Heart right ventricle (tissue), 16 donors: ENCODE measurements at regions of chr19 and their contacts with region 1.

Region 1: GRCh38 chr19:17859533-17860330 is at the start of gene RPL18A:
- DNase-seq: peak; percentile 98 to 99
- ATAC-seq: peak; percentile 96 to 99 (median 98)
- H3K4me3 ChIP-seq: peak within 1 kb of the TSS; percentile 75 to 99 (median 92)
- H3K27ac ChIP-seq: peak within 1 kb of the TSS; percentile 76 to 96 (median 90)
- H3K4me1 ChIP-seq: peaks cover 9 to 33% (median 23%) of the 10 kb centered on the region in 9 donors
- H3K27me3 ChIP-seq: no peaks in the 10 kb centered on the region
- CTCF ChIP-seq: peak; percentile 42 to 91 (median 77)
- total RNA-seq, gene RPL18A: 623 to 1,142 (median 682) TPM

Region 2: DNA sequence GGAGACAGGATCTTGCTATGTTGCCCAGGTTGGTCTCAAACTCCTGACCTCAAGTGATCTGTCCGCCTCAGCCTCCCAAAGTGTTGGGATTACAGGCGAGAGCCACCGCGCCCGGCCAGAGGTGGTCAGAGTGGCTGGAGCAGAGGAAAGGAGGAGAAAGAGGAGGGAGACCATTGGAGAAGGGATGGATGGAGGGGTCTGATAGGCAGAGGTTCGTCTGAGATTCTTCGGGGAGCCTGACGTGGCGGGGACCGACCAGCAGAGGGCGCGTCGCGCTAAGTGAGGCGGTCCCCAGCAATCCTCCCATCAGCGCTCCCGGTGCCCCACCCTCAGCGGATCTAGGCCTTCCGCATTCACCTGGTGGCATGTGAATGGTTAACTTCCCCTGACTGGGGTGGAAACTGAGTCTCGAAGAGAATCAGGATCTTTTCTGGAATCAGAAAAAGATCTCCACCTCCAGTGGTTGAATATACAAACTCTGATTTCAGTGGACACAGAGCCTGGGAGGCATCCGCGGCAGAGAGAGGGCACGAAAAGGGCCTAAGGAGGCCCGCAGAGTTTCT is 513.5 kb before region 1 on chr19:
- intact Hi-C with region 1: loop called in 1 of 10 experiments (anchors 10 kb)
- DNase-seq: peak; percentile 78 to 81
- ATAC-seq: peak; percentile 70 to 85 (median 78)
- H3K4me3 ChIP-seq: no peak overlapping the region
- H3K27ac ChIP-seq: peak overlapping the region in 8 of 10 donors; percentile 56 to 86 (median 77)
- H3K4me1 ChIP-seq: peaks cover 16 to 52% (median 36%) of the 10 kb centered on the region in 9 donors
- H3K27me3 ChIP-seq: peaks cover 0 to 19% (median 0%) of the 10 kb centered on the region in 7 donors
- CTCF ChIP-seq: peak; percentile 92 to 98 (median 97)

Region 3: GRCh38 chr19:17511724-17512573 is 347.8 kb before region 1 on chr19:
- intact Hi-C with region 1: loop called in 1 of 10 experiments (anchors 5 kb)
- DNase-seq: peak; percentile 90 to 93
- ATAC-seq: peak; percentile 84 to 89 (median 85)
- H3K4me3 ChIP-seq: peak overlapping the region; percentile 69 to 98 (median 92)
- H3K27ac ChIP-seq: peak overlapping the region; percentile 96 to 100 (median 100)
- H3K4me1 ChIP-seq: peaks cover 4 to 46% (median 26%) of the 10 kb centered on the region in 9 donors
- H3K27me3 ChIP-seq: no peaks in the 10 kb centered on the region
- CTCF ChIP-seq: peak in 6 of 9 donors; percentile 26 to 53 (median 42)

Region 4: DNA sequence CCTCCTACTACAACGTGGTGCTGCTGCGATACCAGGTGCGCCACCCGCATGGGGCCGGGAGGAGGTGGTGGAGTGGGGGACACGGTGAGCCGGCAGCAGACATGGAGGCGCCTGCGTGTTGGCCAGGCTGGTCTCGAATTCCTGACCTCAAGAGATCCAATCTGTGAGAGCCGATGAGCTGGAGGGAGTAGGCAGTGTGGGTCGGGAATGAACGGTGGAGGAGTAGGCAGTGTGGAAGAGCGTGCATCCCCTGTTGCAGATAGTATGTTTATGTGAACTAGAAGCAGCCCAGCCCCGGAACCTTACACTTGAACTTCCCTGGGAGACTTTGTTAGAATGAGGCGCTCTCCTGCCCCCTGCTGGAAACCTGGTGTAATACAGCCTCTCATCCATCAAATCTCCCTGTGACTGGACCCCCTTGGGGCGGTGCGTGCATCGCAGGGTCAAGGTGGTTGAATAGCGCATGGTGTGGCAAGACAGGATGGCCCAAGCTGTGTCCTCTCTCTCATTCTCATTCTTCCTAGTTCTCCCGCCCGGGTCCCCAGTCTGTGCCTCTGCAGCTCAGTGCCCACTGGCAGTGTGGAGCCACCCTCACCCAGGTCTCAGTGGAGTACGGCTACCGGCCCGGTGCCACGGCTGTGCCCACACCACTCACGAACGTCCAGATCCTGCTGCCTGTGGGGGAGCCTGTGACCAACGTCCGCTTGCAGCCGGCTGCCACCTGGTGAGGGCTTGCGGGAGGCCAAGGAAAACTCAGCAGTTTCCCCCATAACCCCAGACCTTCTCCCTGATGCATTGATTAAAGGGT is 75.3 kb before region 1 on chr19:
- intact Hi-C with region 1: loop called in 2 of 10 experiments (anchors 10 kb)
- DNase-seq: peak; percentile 41 to 56
- ATAC-seq: peak in 6 of 8 donors; percentile 38 to 60 (median 48)
- H3K4me3 ChIP-seq: no peak overlapping the region
- H3K27ac ChIP-seq: no peak overlapping the region
- H3K4me1 ChIP-seq: peaks cover 0 to 3% (median 0%) of the 10 kb centered on the region in 9 donors
- H3K27me3 ChIP-seq: peaks cover 0 to 30% (median 25%) of the 10 kb centered on the region in 7 donors
- CTCF ChIP-seq: peak; percentile 63 to 84 (median 78)

Region 5: GRCh38 chr19:17996826-17997316 is 137.1 kb after region 1 on chr19:
- intact Hi-C with region 1: loop called in 7 of 10 experiments (anchors 2 to 10 kb)
- DNase-seq: peak; percentile 83 to 88
- ATAC-seq: peak; percentile 70 to 90 (median 84)
- H3K4me3 ChIP-seq: no peak overlapping the region
- H3K27ac ChIP-seq: no peak overlapping the region
- H3K4me1 ChIP-seq: peaks cover 0 to 16% (median 5%) of the 10 kb centered on the region in 9 donors
- H3K27me3 ChIP-seq: peaks cover 0 to 18% (median 4%) of the 10 kb centered on the region in 7 donors
- CTCF ChIP-seq: peak; percentile 92 to 99 (median 98)